Psoas muscle (tissue), 8 donors: ENCODE measurements at regions of chr1 and their contacts with region 1.

Region 1: GRCh38 chr1:59100708-59101374 is 196.1 kb upstream of the FGGY start:
- DNase-seq: peak in 1 of 2 donors; percentile 67
- ATAC-seq: peak; percentile 89 to 96 (median 95)
- H3K4me3 ChIP-seq: no peak overlapping the region
- H3K27ac ChIP-seq: peak overlapping the region; percentile 71
- H3K4me1 ChIP-seq: peaks cover 14% of the 10 kb centered on the region
- H3K27me3 ChIP-seq: no peaks in the 10 kb centered on the region
- CTCF ChIP-seq: no peak

Region 2: DNA sequence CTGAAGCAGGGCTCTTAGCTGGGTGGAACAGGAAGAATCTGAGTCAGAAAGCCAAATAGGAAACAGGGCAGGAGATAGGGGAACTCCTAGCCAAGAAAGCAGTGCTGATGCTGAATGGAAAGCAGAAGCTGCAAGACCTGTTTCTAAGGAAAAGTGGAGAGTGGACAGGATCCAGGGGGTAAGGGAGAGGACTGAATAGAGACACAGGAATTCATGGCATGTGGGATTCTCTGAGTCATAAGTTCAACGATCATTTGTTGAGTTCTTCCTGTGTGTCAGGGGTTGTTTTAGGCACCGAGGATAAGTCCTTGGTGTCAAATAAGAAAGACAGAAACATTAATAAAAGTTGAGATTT is 42.3 kb after region 1 on chr1:
- intact Hi-C with region 1: loop called in 1 of 2 experiments (anchors 5 kb)
- DNase-seq: no peak
- ATAC-seq: peak; percentile 16 to 38 (median 23)
- H3K4me3 ChIP-seq: no peak overlapping the region
- H3K27ac ChIP-seq: peak overlapping the region; percentile 69
- H3K4me1 ChIP-seq: peaks cover 46% of the 10 kb centered on the region
- H3K27me3 ChIP-seq: no peaks in the 10 kb centered on the region
- CTCF ChIP-seq: no peak

Region 3: DNA sequence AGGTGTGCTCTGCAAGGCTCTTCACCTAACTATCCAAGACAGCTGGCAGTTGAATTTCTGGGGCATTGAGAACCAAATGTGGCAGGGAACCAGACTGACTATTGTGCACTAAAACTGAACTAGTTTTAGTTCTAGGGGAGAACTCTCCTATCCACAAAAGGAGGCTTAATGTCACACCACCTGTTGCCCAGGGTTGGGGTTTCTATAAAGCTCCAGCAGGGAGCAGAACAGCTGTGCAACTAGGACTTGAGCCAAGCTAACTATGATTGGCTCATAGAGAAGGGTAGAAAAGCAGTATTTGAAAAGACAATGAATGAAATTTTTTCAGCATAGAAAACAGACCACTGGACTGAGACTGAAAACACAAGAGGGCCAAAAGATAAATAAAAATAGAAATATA is 142.7 kb after region 1 on chr1:
- intact Hi-C with region 1: no loop called
- DNase-seq: no peak
- ATAC-seq: peak in 3 of 4 donors; percentile 53 to 68 (median 54)
- H3K4me3 ChIP-seq: no peak overlapping the region
- H3K27ac ChIP-seq: peak overlapping the region; percentile 19
- H3K4me1 ChIP-seq: peaks cover 13% of the 10 kb centered on the region
- H3K27me3 ChIP-seq: no peaks in the 10 kb centered on the region
- CTCF ChIP-seq: no peak

Region 4: DNA sequence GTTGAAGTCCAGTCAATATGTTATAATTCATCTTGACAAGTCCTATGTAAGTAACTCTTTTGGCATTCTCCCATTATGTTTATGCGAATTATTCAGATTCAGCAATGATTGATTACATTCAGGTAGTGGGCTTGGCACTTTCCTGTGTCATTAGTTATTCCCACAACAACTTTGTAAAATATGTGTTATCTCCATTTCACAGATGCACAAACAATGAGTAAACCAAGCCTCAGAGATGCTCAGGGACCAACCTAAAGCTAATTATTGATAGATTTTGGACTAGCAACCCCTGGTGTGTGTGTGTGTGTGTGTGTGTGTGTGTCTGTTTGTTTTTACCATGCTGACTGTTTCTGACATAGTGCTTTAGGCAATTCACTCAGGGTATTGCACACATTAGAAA is 1343.8 kb after region 1 on chr1:
- intact Hi-C with region 1: no loop called
- DNase-seq: no peak
- ATAC-seq: no peak
- H3K4me3 ChIP-seq: no peak overlapping the region
- H3K27ac ChIP-seq: no peak overlapping the region
- H3K4me1 ChIP-seq: no peaks in the 10 kb centered on the region
- H3K27me3 ChIP-seq: no peaks in the 10 kb centered on the region
- CTCF ChIP-seq: no peak